ENCODE measurements at regions of chr13 and their contacts with region 1.

Region 1: DNA sequence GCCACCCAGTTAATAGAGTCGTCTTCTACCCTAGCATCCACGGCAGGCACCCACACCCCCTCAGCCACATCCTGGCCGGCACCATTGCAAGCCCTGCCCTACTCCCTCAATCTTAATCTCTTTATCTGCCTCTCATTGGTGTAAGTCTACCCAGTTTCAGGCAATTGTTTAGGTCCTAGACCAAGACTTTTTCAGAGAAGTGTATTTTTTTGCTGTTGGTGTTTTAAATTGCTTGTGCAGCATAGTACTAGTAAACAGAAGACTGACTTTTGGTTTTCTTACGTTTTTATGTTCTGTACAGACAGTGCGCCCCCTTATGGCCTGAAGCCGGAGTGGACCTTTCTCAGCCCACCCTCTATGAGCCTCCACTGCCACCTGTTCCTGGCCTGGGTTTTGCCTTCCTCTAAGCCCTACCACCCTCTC is 2.3 kb upstream of the LCP1 start:
- DNase-seq: peak; percentile 83
- H3K4me3 Mint-ChIP-seq: peak overlapping the region; percentile 88
- H3K27ac Mint-ChIP-seq: peak overlapping the region; percentile 98
- H3K4me1 Mint-ChIP-seq: peaks cover 36% of the 10 kb centered on the region
- H3K27me3 Mint-ChIP-seq: no peaks in the 10 kb centered on the region

Region 2: DNA sequence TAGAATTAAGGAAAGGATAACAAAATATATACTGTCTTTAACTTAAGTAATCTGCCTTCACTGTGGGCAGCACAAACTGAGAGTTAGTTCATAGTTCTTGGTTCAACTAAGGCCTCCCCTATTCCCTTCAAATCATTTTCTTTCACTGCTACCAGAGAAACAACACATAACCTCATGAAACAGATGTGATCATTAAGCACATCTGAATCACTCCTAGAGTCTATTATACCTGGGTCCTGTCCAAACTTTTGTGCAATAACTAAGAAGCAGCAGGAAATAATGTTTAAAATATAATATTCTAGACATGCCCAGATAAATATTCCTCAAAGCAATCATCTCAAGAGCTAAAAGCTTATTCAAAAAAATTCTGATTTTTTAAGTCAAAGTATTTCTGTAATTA is 194.7 kb before region 1 on chr13:
- CTCF ChIA-PET with region 1: no interaction called
- DNase-seq: no peak
- H3K4me3 Mint-ChIP-seq: no peak overlapping the region
- H3K27ac Mint-ChIP-seq: no peak overlapping the region
- H3K4me1 Mint-ChIP-seq: no peaks in the 10 kb centered on the region
- H3K27me3 Mint-ChIP-seq: no peaks in the 10 kb centered on the region

Region 3: GRCh38 chr13:46079770-46080169 is 104.5 kb before region 1 on chr13:
- CTCF ChIA-PET with region 1: no interaction called
- DNase-seq: no peak
- H3K4me3 Mint-ChIP-seq: no peak overlapping the region
- H3K27ac Mint-ChIP-seq: no peak overlapping the region
- H3K4me1 Mint-ChIP-seq: peaks cover 2% of the 10 kb centered on the region
- H3K27me3 Mint-ChIP-seq: peaks cover 5% of the 10 kb centered on the region

Region 4: DNA sequence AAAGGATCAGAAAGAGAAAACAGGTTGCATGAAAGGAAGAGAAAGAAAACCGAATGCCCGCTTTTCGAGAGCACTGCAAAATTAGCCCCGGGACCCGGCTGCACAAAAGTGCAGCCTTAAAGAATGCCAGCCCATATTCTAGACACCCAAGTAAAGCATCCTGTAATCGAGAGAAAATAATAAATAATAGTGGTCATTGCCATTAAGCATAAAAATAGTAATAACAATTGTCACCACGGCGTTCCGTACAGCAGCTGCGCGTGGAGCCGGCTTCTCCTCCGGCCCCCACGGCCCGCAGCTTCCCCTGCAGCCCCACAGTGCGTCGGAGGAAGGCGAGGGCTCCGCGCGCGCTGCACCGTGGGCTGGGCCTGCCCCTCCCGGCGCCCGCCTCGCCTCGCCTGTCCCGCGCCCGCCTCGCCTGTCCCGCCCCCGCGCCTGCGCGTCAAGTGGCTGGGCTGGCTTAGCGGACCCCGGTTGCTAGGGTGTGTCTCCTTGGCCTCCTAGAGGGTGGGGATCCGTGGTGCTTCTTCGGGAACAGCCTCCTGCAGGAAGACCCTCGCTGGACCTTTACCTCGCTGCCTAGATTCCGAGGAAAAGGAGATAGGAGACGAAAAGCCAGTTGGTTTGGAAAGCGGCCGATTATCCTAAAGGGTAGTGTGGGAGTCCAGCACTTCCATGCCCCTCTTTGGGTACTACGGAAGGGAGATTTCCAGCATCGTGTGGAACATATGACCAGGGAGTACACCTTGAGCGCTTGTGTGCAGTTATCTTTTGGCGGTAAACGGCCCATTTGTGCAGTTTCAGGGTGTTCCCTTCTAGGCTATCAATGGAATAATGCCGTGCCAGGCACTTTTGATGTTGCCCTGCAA is 27.4 kb after region 1 on chr13 and contains the start of gene LRRC63:
- CTCF ChIA-PET with region 1: interaction called, 11 read pairs
- DNase-seq: peak; percentile 89
- H3K4me3 Mint-ChIP-seq: peak within 1 kb of the TSS; percentile 93
- H3K27ac Mint-ChIP-seq: peak within 1 kb of the TSS; percentile 95
- H3K4me1 Mint-ChIP-seq: peaks cover 50% of the 10 kb centered on the region
- H3K27me3 Mint-ChIP-seq: no peaks in the 10 kb centered on the region